Heart left ventricle (tissue), 16 donors: ENCODE measurements at regions of chr7 and their contacts with region 1.

Region 1: DNA sequence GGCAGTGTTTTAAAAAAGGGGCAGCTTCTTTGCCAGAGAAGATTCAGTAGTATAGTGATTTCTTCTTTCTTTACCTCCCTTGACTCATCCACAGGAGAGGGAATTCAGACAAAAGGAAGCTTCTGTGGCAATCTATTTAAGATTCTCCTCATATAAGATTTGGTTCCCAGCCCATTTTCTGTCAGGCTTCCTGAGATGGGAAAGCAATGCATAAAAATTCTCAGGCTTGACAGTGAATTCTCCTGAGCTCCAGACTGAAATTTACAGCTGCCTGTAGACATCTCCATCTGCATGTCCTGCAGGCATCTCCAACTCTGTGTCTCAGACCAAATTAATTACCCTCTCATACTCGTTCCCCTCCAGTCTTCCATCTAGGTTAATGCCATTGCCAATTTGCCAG is 72.8 kb downstream of the TSPAN12 start:
- DNase-seq: no peak
- ATAC-seq: no peak
- H3K4me3 ChIP-seq: no peak overlapping the region
- H3K27ac ChIP-seq: no peak overlapping the region
- H3K4me1 ChIP-seq: no peaks in the 10 kb centered on the region
- H3K27me3 ChIP-seq: no peaks in the 10 kb centered on the region
- CTCF ChIP-seq: no peak
- POLR2A ChIP-seq: no peak

Region 2: GRCh38 chr7:120733143-120733542 is 52.0 kb before region 1 on chr7:
- intact Hi-C with region 1: loop called in 1 of 10 experiments (anchors 10 kb)
- DNase-seq: no peak
- ATAC-seq: no peak
- H3K4me3 ChIP-seq: no peak overlapping the region
- H3K27ac ChIP-seq: no peak overlapping the region
- H3K4me1 ChIP-seq: peaks cover 0 to 4% (median 0%) of the 10 kb centered on the region in 12 donors
- H3K27me3 ChIP-seq: no peaks in the 10 kb centered on the region
- CTCF ChIP-seq: no peak
- POLR2A ChIP-seq: no peak